ENCODE measurements at regions of chr6 and their contacts with region 1.

Region 1: GRCh38 chr6:90098001-90098531 is 198.6 kb downstream of the BACH2 start:
- DNase-seq: peak; percentile 89
- ATAC-seq: peak; percentile 86
- H3K4me3 ChIP-seq: no peak overlapping the region
- H3K27ac ChIP-seq: peak overlapping the region; percentile 9; the same call in 1 of the 2 replicates
- H3K4me1 ChIP-seq: peaks cover 12% of the 10 kb centered on the region
- H3K27me3 ChIP-seq: no peaks in the 10 kb centered on the region
- CTCF ChIP-seq: peak; percentile 59
- POLR2A ChIP-seq: no peak
- RAD21 ChIP-seq: peak; percentile 58

Region 2: GRCh38 chr6:89675949-89676748 is 421.9 kb before region 1 on chr6:
- CTCF ChIA-PET with region 1: no interaction called
- POLR2A ChIA-PET with region 1: no interaction called
- dilution Hi-C with region 1: no loop called
- in situ Hi-C with region 1: no loop called
- intact Hi-C with region 1: no loop called
- DNase-seq: peak; percentile 84
- ATAC-seq: peak; percentile 79
- H3K4me3 ChIP-seq: no peak overlapping the region
- H3K27ac ChIP-seq: peak overlapping the region; percentile 20; the same call in 1 of the 2 replicates
- H3K4me1 ChIP-seq: peaks cover 3% of the 10 kb centered on the region; the same call in 1 of the 2 replicates
- H3K27me3 ChIP-seq: no peaks in the 10 kb centered on the region
- CTCF ChIP-seq: no peak
- POLR2A ChIP-seq: no peak
- RAD21 ChIP-seq: no peak

Region 3: GRCh38 chr6:89984926-89985750 is 112.9 kb before region 1 on chr6:
- CTCF ChIA-PET with region 1: interaction called, 3 read pairs
- POLR2A ChIA-PET with region 1: no interaction called
- dilution Hi-C with region 1: no loop called
- in situ Hi-C with region 1: no loop called
- intact Hi-C with region 1: loop called (anchors 5 kb)
- DNase-seq: peak; percentile 76
- ATAC-seq: peak; percentile 42
- H3K4me3 ChIP-seq: no peak overlapping the region
- H3K27ac ChIP-seq: peak overlapping the region; percentile 5
- H3K4me1 ChIP-seq: peaks cover 22% of the 10 kb centered on the region
- H3K27me3 ChIP-seq: no peaks in the 10 kb centered on the region
- CTCF ChIP-seq: no peak
- POLR2A ChIP-seq: no peak
- RAD21 ChIP-seq: no peak

Region 4: GRCh38 chr6:90179190-90180169 is 81.4 kb after region 1 on chr6:
- CTCF ChIA-PET with region 1: interaction called, 3 read pairs
- POLR2A ChIA-PET with region 1: no interaction called
- dilution Hi-C with region 1: no loop called
- in situ Hi-C with region 1: no loop called
- intact Hi-C with region 1: loop called (anchors 5 kb)
- DNase-seq: no peak
- ATAC-seq: no peak
- H3K4me3 ChIP-seq: no peak overlapping the region
- H3K27ac ChIP-seq: no peak overlapping the region
- H3K4me1 ChIP-seq: peaks cover 10% of the 10 kb centered on the region
- H3K27me3 ChIP-seq: no peaks in the 10 kb centered on the region; the same call in none of the 2 replicates
- CTCF ChIP-seq: peak; percentile 43
- POLR2A ChIP-seq: no peak
- RAD21 ChIP-seq: peak; percentile 27; the same call in 1 of the 2 replicates

Region 5: GRCh38 chr6:90393232-90393884 is 295.3 kb after region 1 on chr6:
- CTCF ChIA-PET with region 1: no interaction called
- POLR2A ChIA-PET with region 1: no interaction called
- dilution Hi-C with region 1: no loop called
- in situ Hi-C with region 1: no loop called
- intact Hi-C with region 1: loop called (anchors 5 kb)
- DNase-seq: peak; percentile 71
- ATAC-seq: peak; percentile 93
- H3K4me3 ChIP-seq: no peak overlapping the region
- H3K27ac ChIP-seq: no peak overlapping the region
- H3K4me1 ChIP-seq: no peaks in the 10 kb centered on the region
- H3K27me3 ChIP-seq: peaks cover 20% of the 10 kb centered on the region
- CTCF ChIP-seq: peak; percentile 81
- POLR2A ChIP-seq: no peak
- RAD21 ChIP-seq: peak; percentile 91

Region 6: GRCh38 chr6:90478789-90479602 is 380.9 kb after region 1 on chr6:
- CTCF ChIA-PET with region 1: no interaction called
- POLR2A ChIA-PET with region 1: no interaction called
- dilution Hi-C with region 1: no loop called
- in situ Hi-C with region 1: no loop called
- intact Hi-C with region 1: loop called (anchors 5 kb)
- DNase-seq: peak; percentile 95
- ATAC-seq: peak; percentile 99
- H3K4me3 ChIP-seq: no peak overlapping the region
- H3K27ac ChIP-seq: no peak overlapping the region
- H3K4me1 ChIP-seq: no peaks in the 10 kb centered on the region; the same call in 1 of the 2 replicates
- H3K27me3 ChIP-seq: peaks cover 5% of the 10 kb centered on the region; the same call in 1 of the 2 replicates
- CTCF ChIP-seq: peak; percentile 98
- POLR2A ChIP-seq: peak; percentile 62
- RAD21 ChIP-seq: peak; percentile 100